CD4-positive, alpha-beta T cell (primary cell): ENCODE measurements at regions of chr14 and their contacts with region 1.

Region 1: GRCh38 chr14:103085106-103086091 is 1.4 kb downstream of the LBHD2 start:
- DNase-seq: no peak
- ATAC-seq: no peak
- H3K4me3 ChIP-seq: no peak overlapping the region
- H3K4me3 Mint-ChIP-seq: no peak overlapping the region
- H3K27ac ChIP-seq: no peak overlapping the region
- H3K27ac Mint-ChIP-seq: no peak overlapping the region
- H3K4me1 ChIP-seq: no peaks in the 10 kb centered on the region
- H3K4me1 Mint-ChIP-seq: no peaks in the 10 kb centered on the region
- H3K27me3 ChIP-seq: peaks cover 12 to 26% of the 10 kb centered on the region in 2 experiments
- H3K27me3 Mint-ChIP-seq: peaks cover 23% of the 10 kb centered on the region
- CTCF ChIP-seq: no peak

Region 2: GRCh38 chr14:102602379-102603292 is 482.8 kb before region 1 on chr14:
- CTCF ChIA-PET with region 1: no interaction called
- POLR2A ChIA-PET with region 1: no interaction called
- intact Hi-C with region 1: loop called in 1 of 2 experiments (anchors 5 kb)
- DNase-seq: no peak
- ATAC-seq: no peak
- H3K4me3 ChIP-seq: no peak overlapping the region
- H3K4me3 Mint-ChIP-seq: no peak overlapping the region
- H3K27ac ChIP-seq: no peak overlapping the region
- H3K27ac Mint-ChIP-seq: no peak overlapping the region
- H3K4me1 ChIP-seq: peaks cover 17% of the 10 kb centered on the region
- H3K4me1 Mint-ChIP-seq: peaks cover 61% of the 10 kb centered on the region
- H3K27me3 ChIP-seq: no peaks in the 10 kb centered on the region
- H3K27me3 Mint-ChIP-seq: no peaks in the 10 kb centered on the region
- CTCF ChIP-seq: no peak

Region 3: DNA sequence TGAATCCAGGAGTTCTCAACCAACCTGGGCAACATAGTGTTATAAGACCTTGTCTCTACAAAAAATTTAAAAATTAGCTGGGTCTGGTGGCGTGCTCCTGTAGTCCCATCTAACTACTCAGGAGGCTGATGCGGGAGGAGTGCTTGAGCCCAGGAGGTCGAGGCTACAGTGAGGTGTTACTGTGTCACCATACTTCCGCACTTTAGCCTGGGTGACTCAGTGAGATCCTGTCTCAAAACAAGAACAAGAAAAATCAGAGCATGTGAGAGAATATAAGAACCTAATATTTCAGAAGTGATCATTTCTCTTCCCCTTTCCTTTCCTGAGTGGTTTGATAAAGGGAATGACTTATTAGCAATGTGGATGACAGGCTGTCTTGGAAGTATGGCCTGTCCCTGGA is 298.6 kb before region 1 on chr14:
- CTCF ChIA-PET with region 1: no interaction called
- POLR2A ChIA-PET with region 1: no interaction called
- intact Hi-C with region 1: no loop called
- DNase-seq: peak in 4 of 14 experiments; percentile 20 to 58 (median 35)
- ATAC-seq: no peak
- H3K4me3 ChIP-seq: no peak overlapping the region
- H3K4me3 Mint-ChIP-seq: peak overlapping the region; percentile 43
- H3K27ac ChIP-seq: no peak overlapping the region
- H3K27ac Mint-ChIP-seq: no peak overlapping the region
- H3K4me1 ChIP-seq: peaks cover 45% of the 10 kb centered on the region
- H3K4me1 Mint-ChIP-seq: peaks cover 77% of the 10 kb centered on the region
- H3K27me3 ChIP-seq: no peaks in the 10 kb centered on the region
- H3K27me3 Mint-ChIP-seq: no peaks in the 10 kb centered on the region
- CTCF ChIP-seq: no peak

Region 4: DNA sequence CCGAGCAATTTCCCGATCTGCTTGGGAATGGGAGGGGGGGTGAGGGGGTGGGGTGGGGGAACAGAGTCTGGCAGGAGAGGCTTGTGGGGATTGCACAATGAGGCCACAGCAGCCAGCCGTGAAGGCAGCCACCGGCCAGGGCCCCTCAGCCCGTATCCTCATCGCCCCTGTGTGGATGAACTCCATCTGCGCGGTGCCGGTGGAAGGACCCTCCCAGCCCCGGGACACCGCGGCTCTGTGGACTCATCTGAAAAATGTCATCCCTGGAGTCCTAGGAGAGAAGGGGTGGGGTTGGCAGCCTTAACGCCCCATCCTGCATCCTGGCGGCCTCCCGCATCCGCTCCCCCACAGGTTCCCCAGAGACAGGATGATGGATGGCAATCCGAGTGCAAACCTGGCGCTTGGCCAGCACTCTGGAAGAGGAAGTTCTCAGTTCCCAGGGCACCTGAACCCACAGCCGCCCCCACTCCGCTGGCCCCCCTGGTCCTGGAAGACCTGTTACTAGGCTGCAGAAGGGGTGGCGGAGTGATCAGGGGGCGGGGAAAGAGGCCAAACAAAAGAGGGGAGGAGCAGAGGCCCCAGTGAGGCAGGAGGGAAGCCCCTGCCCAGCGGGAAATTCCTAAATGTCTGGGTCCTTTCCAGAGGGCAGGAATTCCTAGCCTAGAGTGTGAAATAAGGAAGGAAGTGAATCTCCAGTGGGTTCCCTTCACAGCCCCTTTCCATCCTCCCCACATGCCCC is 36.6 kb after region 1 on chr14:
- CTCF ChIA-PET with region 1: no interaction called
- POLR2A ChIA-PET with region 1: no interaction called
- intact Hi-C with region 1: no loop called
- DNase-seq: peak in 2 of 14 experiments; percentile 54 to 59
- ATAC-seq: no peak
- H3K4me3 ChIP-seq: peak overlapping the region; percentile 24
- H3K4me3 Mint-ChIP-seq: peak overlapping the region; percentile 30
- H3K27ac ChIP-seq: no peak overlapping the region
- H3K27ac Mint-ChIP-seq: no peak overlapping the region
- H3K4me1 ChIP-seq: peaks cover 37% of the 10 kb centered on the region
- H3K4me1 Mint-ChIP-seq: peaks cover 4% of the 10 kb centered on the region
- H3K27me3 ChIP-seq: peaks cover 30 to 41% of the 10 kb centered on the region in 2 experiments
- H3K27me3 Mint-ChIP-seq: peaks cover 25% of the 10 kb centered on the region
- CTCF ChIP-seq: no peak